ENCODE measurements at regions of chr2 and their contacts with region 1.

Region 1: DNA sequence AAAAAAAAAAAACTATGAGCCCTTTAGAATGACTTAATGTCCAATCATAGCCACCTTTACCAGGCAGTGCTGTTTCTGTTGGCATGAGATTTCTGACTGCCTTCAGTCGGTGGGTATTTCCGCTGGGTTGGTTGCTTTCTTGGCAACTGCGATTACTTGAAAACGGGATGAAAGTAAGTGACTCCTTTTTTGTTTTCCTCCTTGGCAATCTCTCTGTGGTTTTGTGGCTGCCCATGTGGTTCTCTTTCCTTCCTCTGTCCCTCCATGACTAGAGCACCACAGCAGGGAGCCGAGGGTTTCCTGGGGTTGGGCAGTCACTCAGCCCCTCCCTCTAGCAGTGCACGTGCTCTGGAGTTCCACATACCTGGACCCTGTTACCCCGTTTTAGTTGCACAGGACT is 112.1 kb downstream of the KLHL29 start:
- DNase-seq: no peak

Region 2: GRCh38 chr2:23293063-23293462 is 204.0 kb before region 1 on chr2:
- intact Hi-C with region 1: no loop called
- DNase-seq: no peak

Region 3: GRCh38 chr2:23351388-23352141 is 145.5 kb before region 1 on chr2:
- intact Hi-C with region 1: no loop called
- DNase-seq: peak; percentile 89

Region 4: DNA sequence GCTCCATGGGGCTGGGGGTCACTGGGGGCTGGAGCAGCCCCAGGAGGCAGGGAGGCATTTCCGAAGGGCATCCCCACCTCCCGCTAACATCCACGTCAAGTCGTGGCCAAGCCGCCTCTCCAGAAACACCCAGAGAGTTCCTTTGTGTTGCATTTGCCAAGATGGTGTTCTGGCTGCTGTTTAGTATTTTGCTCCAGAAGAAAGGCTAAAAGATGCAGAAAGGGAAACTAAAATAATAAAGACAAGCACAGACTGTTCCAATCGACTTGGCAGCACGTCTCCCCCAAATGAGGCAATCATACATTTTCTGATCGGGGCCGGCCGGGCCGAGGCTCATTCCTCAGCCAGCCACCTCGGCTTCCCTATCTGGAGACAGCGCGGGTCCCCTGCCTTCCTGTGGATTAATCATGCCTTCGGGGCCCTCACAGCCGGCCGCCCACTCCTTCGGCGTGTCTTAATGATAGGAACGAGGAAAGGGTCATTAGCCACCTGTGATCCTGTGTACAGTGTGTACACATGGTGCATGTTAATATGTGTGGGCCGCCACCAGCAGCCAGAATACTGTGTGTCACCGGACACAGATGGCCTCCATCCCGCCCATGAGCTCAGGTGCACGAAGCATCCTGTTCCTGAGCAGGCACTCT is 57.1 kb after region 1 on chr2:
- intact Hi-C with region 1: loop called (anchors 5 kb)
- DNase-seq: no peak

Region 5: GRCh38 chr2:23617167-23617810 is 120.2 kb after region 1 on chr2:
- intact Hi-C with region 1: loop called (anchors 5 kb)
- DNase-seq: no peak